ENCODE measurements at regions of chr3 and their contacts with region 1.

Region 1: GRCh38 chr3:126522363-126522788 is 1.6 kb upstream of the CHST13 start:
- DNase-seq: peak in 7 of 9 experiments; percentile 25 to 71 (median 50)
- ATAC-seq: no peak
- H3K4me3 ChIP-seq: no peak overlapping the region
- H3K4me3 Mint-ChIP-seq: no peak overlapping the region
- H3K27ac ChIP-seq: no peak overlapping the region
- H3K27ac Mint-ChIP-seq: no peak overlapping the region
- H3K4me1 ChIP-seq: no peaks in the 10 kb centered on the region
- H3K4me1 Mint-ChIP-seq: peaks cover 2% of the 10 kb centered on the region
- H3K27me3 ChIP-seq: no peaks in the 10 kb centered on the region
- H3K27me3 Mint-ChIP-seq: peaks cover 22% of the 10 kb centered on the region
- CTCF ChIP-seq: peak; percentile 83

Region 2: GRCh38 chr3:125556314-125556713 is 966.1 kb before region 1 on chr3:
- CTCF ChIA-PET with region 1: no interaction called
- POLR2A ChIA-PET with region 1: no interaction called
- intact Hi-C with region 1: no loop called
- DNase-seq: no peak
- ATAC-seq: no peak
- H3K4me3 ChIP-seq: no peak overlapping the region
- H3K4me3 Mint-ChIP-seq: no peak overlapping the region
- H3K27ac ChIP-seq: no peak overlapping the region
- H3K27ac Mint-ChIP-seq: no peak overlapping the region
- H3K4me1 ChIP-seq: no peaks in the 10 kb centered on the region
- H3K4me1 Mint-ChIP-seq: no peaks in the 10 kb centered on the region
- H3K27me3 ChIP-seq: no peaks in the 10 kb centered on the region
- H3K27me3 Mint-ChIP-seq: no peaks in the 10 kb centered on the region
- CTCF ChIP-seq: no peak

Region 3: DNA sequence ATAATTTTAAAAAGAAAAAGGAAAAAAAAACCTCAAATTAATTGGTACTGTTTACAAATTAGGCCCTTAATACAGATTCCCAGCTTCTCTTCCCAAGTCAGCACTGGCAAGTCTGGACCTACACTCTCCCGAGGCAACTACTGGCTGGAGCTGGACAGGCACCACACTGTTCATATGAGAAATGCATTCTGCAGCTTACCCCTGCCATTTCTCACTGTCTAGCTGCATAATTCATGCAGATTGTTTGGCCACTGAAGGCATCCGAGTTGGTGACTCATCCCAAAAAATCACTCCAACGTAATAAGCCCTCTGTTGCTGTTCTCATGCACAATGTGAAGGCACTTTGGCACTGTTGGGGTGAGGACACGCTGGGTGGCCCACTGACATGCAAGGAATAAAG is 508.1 kb before region 1 on chr3:
- CTCF ChIA-PET with region 1: no interaction called
- POLR2A ChIA-PET with region 1: no interaction called
- intact Hi-C with region 1: no loop called
- DNase-seq: peak in 1 of 9 experiments; percentile 8
- ATAC-seq: no peak
- H3K4me3 ChIP-seq: no peak overlapping the region
- H3K4me3 Mint-ChIP-seq: no peak overlapping the region
- H3K27ac ChIP-seq: no peak overlapping the region
- H3K27ac Mint-ChIP-seq: no peak overlapping the region
- H3K4me1 ChIP-seq: no peaks in the 10 kb centered on the region
- H3K4me1 Mint-ChIP-seq: no peaks in the 10 kb centered on the region
- H3K27me3 ChIP-seq: no peaks in the 10 kb centered on the region
- H3K27me3 Mint-ChIP-seq: no peaks in the 10 kb centered on the region
- CTCF ChIP-seq: no peak

Region 4: DNA sequence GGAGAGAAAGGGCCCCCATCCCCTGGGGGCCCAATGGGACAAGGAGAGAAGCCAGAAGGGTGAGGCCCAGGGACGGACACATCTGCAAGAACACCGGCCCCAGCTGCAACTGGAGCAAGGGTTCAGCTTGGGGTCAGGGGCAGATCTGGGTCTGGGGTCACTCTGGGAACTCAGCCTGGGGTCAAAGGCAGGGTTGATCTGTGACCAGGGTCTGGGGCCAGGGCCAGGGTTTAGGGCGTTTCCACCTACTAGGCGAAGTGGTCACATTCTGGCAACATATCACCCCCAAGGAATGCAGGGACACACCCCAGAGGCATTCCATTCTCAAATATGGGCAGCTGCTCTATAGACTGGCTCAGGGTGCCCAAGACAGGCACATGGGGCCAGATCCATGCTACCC is 13.8 kb before region 1 on chr3:
- CTCF ChIA-PET with region 1: interaction called, 47 read pairs
- POLR2A ChIA-PET with region 1: no interaction called
- intact Hi-C with region 1: no loop called
- DNase-seq: no peak
- ATAC-seq: no peak
- H3K4me3 ChIP-seq: no peak overlapping the region
- H3K4me3 Mint-ChIP-seq: no peak overlapping the region
- H3K27ac ChIP-seq: no peak overlapping the region
- H3K27ac Mint-ChIP-seq: no peak overlapping the region
- H3K4me1 ChIP-seq: no peaks in the 10 kb centered on the region
- H3K4me1 Mint-ChIP-seq: no peaks in the 10 kb centered on the region
- H3K27me3 ChIP-seq: no peaks in the 10 kb centered on the region
- H3K27me3 Mint-ChIP-seq: peaks cover 3% of the 10 kb centered on the region
- CTCF ChIP-seq: no peak

Region 5: GRCh38 chr3:127455541-127456450 is 933.4 kb after region 1 on chr3:
- CTCF ChIA-PET with region 1: no interaction called
- POLR2A ChIA-PET with region 1: no interaction called
- intact Hi-C with region 1: loop called (anchors 1 to 5 kb)
- DNase-seq: peak in 7 of 9 experiments; percentile 4 to 47 (median 36)
- ATAC-seq: peak; percentile 65
- H3K4me3 ChIP-seq: no peak overlapping the region
- H3K4me3 Mint-ChIP-seq: no peak overlapping the region
- H3K27ac ChIP-seq: no peak overlapping the region
- H3K27ac Mint-ChIP-seq: no peak overlapping the region
- H3K4me1 ChIP-seq: peaks cover 11% of the 10 kb centered on the region
- H3K4me1 Mint-ChIP-seq: peaks cover 11% of the 10 kb centered on the region
- H3K27me3 ChIP-seq: peaks cover 9 to 18% of the 10 kb centered on the region in 2 experiments
- H3K27me3 Mint-ChIP-seq: peaks cover 70% of the 10 kb centered on the region
- CTCF ChIP-seq: peak; percentile 45

Measured in CD8-positive, alpha-beta T cell (primary cell).